ENCODE measurements at regions of chr11 and their contacts with region 1.

Region 1: GRCh38 chr11:35617687-35618496 is at the start of gene FJX1:
- DNase-seq: peak; percentile 66 to 70
- ATAC-seq: peak; percentile 31 to 72 (median 60)
- H3K4me3 ChIP-seq: peak within 1 kb of the TSS; percentile 74
- H3K27ac ChIP-seq: peak within 1 kb of the TSS; percentile 47
- H3K4me1 ChIP-seq: no peaks in the 10 kb centered on the region
- H3K27me3 ChIP-seq: peaks cover 0 to 15% (median 0%) of the 10 kb centered on the region in 3 donors
- CTCF ChIP-seq: no peak
- total RNA-seq, gene FJX1: 0.75 to 4.0 (median 3.1) TPM

Region 2: DNA sequence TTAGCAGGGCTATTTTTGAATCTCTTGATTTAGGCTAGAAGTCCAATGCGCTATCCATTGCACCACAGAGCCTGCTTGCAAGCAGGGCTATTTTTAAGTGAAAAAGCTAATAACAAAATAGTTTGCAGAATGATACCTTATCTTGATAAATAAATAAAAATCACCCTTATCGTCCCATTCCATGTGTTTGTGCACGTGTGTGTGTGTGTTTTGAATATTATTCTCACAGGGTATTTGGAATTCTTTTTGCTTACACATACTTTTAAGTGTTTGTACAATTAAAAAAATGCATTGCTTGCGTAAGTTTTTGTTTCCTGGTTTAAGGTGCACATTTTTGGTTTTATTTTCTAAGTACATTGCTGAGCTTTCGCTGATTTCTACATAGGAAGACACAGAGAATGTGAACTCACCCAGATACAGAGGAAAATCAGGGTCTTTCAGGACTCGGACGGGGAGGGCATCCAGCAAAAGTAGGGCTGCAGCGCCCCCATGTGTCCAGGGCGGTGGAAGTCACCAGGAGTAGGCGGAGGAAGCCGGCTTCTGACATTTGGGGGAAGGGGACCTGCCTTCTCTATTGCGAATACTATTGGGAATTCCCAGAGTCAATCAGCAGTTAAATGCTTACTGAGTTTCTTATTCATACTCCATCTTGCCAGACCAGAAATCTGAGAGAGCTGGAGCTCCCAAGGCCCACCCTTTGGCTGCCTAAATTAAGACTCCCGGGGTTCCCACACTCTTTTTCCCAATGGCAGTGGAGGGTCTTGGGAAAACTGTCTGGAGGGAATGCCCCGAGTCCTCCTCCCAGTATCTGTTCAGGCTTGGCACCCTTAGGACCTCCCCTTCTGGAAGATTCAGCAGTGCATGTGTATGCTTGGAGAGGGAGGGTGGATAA is 225.7 kb before region 1 on chr11:
- intact Hi-C with region 1: no loop called
- DNase-seq: peak; percentile 84 to 88
- ATAC-seq: peak; percentile 80 to 95 (median 88)
- H3K4me3 ChIP-seq: no peak overlapping the region
- H3K27ac ChIP-seq: no peak overlapping the region
- H3K4me1 ChIP-seq: peaks cover 5% of the 10 kb centered on the region
- H3K27me3 ChIP-seq: no peaks in the 10 kb centered on the region
- CTCF ChIP-seq: peak; percentile 89

Region 3: GRCh38 chr11:35605711-35606110 is 12.2 kb before region 1 on chr11:
- intact Hi-C with region 1: no loop called
- DNase-seq: no peak
- ATAC-seq: no peak
- H3K4me3 ChIP-seq: no peak overlapping the region
- H3K27ac ChIP-seq: no peak overlapping the region
- H3K4me1 ChIP-seq: peaks cover 2% of the 10 kb centered on the region
- H3K27me3 ChIP-seq: peaks cover 2 to 16% (median 5%) of the 10 kb centered on the region in 3 donors
- CTCF ChIP-seq: no peak

Region 4: DNA sequence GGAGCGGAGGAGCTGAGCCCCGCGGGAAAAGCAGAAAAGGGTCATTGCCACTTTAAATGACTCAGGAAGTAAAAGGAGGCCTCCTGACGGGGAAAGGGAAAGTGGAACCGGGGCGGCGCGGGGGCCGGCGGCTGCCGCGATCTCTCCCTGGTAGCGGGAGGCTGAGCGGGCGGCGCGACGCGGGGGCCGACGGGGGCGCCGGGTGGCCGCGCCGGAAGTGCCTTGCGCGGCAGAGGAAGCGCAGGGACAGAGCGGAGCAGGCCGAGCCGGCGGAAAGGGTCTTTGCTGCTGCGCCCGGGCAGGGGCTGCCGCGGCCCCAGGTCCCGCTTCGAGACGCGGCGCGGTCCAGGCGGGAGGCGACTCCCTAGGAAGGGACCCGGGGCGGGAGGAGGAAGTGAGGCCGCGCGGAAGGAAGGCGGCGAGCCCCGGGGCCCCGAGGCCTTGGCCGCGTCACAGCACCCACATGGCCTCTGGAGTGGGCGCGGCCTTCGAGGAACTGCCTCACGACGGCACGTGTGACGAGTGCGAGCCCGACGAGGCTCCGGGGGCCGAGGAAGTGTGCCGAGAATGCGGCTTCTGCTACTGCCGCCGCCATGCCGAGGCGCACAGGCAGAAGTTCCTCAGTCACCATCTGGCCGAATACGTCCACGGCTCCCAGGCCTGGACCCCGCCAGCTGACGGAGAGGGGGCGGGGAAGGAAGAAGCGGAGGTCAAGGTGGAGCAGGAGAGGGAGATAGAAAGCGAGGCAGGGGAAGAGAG is 44.9 kb after region 1 on chr11 and contains the start of gene TRIM44:
- intact Hi-C with region 1: loop called in 1 of 2 experiments (anchors 2 kb)
- DNase-seq: peak; percentile 87 to 92
- ATAC-seq: peak; percentile 95 to 96 (median 95)
- H3K4me3 ChIP-seq: peak within 1 kb of the TSS; percentile 82
- H3K27ac ChIP-seq: peak within 1 kb of the TSS; percentile 98
- H3K4me1 ChIP-seq: peaks cover 10% of the 10 kb centered on the region
- H3K27me3 ChIP-seq: no peaks in the 10 kb centered on the region
- CTCF ChIP-seq: no peak
- total RNA-seq, gene TRIM44: 34.0 to 46.8 (median 41.9) TPM

Region 5: DNA sequence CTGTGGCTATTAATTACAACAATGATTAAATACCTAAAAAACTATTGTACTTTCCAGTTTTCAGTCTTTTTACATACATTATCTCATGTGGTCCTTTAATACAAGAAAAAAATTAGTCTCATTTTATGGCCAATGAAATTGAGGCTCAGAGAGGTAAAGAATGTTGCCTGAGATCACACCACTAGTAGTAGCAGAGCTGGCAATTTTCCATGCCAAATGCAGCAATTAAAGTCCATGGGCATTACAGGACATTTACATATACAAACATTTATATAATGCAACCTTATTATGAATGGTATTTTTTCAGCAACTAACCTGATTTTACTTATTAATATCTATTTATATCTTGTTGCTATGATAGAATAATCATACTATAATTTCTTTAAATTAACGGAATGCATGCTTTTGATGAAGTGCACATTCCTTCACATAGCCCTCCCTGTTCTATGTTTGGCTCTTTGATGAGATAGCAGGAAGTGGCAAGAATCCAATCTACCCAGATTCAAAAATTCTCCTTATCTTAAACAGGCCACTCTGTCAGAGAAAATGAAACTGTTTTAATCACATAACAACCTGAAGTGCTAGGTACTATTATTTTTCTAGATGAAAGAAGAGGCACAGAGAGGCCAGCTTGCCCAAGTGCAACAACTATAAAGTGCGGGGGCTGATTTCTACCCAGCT is 205.1 kb after region 1 on chr11:
- intact Hi-C with region 1: loop called (anchors 5 to 10 kb)
- DNase-seq: no peak
- ATAC-seq: no peak
- H3K4me3 ChIP-seq: no peak overlapping the region
- H3K27ac ChIP-seq: no peak overlapping the region
- H3K4me1 ChIP-seq: no peaks in the 10 kb centered on the region
- H3K27me3 ChIP-seq: no peaks in the 10 kb centered on the region
- CTCF ChIP-seq: no peak

Region 6: DNA sequence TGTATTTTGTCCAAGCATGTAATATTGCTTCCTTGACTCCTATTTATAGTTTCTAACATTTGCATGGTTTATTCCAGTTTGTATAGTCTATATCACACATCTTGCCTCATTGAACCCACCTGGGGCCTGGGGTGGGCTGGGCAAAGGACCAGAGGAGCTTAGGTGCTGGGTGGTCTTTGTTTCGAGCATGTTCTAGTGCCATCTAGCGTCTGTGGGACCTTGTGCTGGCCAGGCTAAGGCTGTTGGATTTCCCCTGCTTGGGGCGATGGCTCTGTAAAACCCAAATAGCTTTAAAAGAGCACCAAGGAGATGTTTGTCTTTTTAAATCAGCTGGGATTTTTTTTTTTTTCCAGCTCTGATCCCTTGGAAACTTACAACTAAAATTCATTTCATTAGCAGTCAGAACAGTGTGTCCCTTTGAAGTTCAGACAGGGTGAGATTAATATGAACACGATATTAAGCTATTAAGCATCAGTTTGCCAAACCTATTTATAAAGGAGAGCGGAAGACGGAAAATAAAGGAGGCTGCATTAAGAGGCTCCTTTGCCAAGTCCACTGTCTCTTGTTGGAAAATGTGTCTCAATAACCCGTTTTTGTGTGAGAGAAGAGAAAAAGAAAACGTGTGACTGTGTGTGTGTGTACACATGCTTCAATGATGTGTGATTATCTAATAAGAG is 514.0 kb after region 1 on chr11:
- intact Hi-C with region 1: loop called (anchors 2 to 5 kb)
- DNase-seq: peak; percentile 52 to 57
- ATAC-seq: peak; percentile 60 to 92 (median 76)
- H3K4me3 ChIP-seq: no peak overlapping the region
- H3K27ac ChIP-seq: no peak overlapping the region
- H3K4me1 ChIP-seq: no peaks in the 10 kb centered on the region
- H3K27me3 ChIP-seq: no peaks in the 10 kb centered on the region
- CTCF ChIP-seq: peak; percentile 69

Region 7: GRCh38 chr11:36265793-36266628 is 648.1 kb after region 1 on chr11:
- intact Hi-C with region 1: loop called (anchors 2 to 5 kb)
- DNase-seq: peak; percentile 42 to 74
- ATAC-seq: peak; percentile 56 to 89 (median 77)
- H3K4me3 ChIP-seq: no peak overlapping the region
- H3K27ac ChIP-seq: no peak overlapping the region
- H3K4me1 ChIP-seq: no peaks in the 10 kb centered on the region
- H3K27me3 ChIP-seq: no peaks in the 10 kb centered on the region
- CTCF ChIP-seq: peak; percentile 79